Activated CD4-positive, alpha-beta memory T cell treated with anti-CD3 and anti-CD28 coated beads, Interleukin-2, amount 10 ng/mL, durations not matched to agents 7 days and 5 days (primary cell): ENCODE measurements at regions of chr5 and their contacts with region 1.

Region 1: DNA sequence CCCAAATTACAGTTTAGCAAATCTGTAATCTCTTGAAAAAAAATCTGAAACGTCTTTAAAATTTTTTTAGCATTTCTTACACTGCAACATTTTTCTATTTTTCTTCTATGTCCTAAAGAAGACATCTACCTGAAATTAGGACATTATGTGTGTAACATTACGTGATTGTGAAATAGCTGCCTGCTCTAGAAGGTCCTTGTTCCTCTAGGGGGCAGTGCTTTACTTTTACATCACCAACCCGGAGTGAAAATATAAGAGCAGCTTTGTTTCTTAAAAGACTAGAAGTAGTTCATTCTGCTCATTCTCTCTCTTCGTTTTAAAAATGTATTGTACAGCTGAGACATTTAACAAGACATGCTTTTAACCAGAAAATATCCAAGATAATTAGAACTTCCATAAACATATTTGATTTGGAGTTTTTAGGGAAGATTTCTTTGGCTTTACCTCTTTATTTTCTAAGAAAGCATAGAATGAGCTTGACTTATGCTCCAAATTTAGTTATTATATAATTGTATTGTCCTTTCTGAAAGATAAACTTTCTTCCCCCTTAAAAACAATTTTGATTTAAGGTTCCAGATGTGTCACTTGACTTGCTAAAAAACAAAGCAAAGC is 48.1 kb upstream of the RIOK2 start:
- DNase-seq: no peak
- H3K4me3 Mint-ChIP-seq: no peak overlapping the region
- H3K27ac Mint-ChIP-seq: no peak overlapping the region
- H3K4me1 Mint-ChIP-seq: no peaks in the 10 kb centered on the region
- H3K27me3 Mint-ChIP-seq: no peaks in the 10 kb centered on the region

Region 2: GRCh38 chr5:97243353-97243752 is 12.2 kb after region 1 on chr5:
- CTCF ChIA-PET with region 1: interaction called, 10 read pairs
- POLR2A ChIA-PET with region 1: no interaction called
- DNase-seq: no peak
- H3K4me3 Mint-ChIP-seq: no peak overlapping the region
- H3K27ac Mint-ChIP-seq: no peak overlapping the region
- H3K4me1 Mint-ChIP-seq: no peaks in the 10 kb centered on the region
- H3K27me3 Mint-ChIP-seq: no peaks in the 10 kb centered on the region

Region 3: DNA sequence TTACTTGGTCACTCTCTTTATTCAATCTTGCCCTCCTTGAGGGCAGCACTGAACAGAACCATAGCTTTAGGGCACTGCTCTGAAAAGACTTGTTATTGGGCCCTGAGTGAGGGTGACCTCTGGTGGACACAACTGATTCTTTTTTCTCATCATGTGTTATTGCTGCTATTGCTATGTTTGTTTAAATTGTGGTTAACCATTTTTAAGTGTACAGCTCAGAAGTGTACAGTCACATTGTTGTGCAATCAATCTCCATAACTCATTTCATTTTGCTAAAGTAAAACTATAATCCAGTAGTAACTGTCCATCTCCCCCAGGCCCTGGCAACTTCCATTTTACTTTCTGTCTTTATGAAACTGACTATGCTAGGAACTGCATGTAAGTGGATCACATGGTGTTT is 303.0 kb after region 1 on chr5:
- CTCF ChIA-PET with region 1: interaction called, 12 read pairs
- POLR2A ChIA-PET with region 1: no interaction called
- DNase-seq: no peak
- H3K4me3 Mint-ChIP-seq: no peak overlapping the region
- H3K27ac Mint-ChIP-seq: no peak overlapping the region
- H3K4me1 Mint-ChIP-seq: no peaks in the 10 kb centered on the region
- H3K27me3 Mint-ChIP-seq: no peaks in the 10 kb centered on the region